ENCODE measurements at regions of chr18 and their contacts with region 1.

Region 1: DNA sequence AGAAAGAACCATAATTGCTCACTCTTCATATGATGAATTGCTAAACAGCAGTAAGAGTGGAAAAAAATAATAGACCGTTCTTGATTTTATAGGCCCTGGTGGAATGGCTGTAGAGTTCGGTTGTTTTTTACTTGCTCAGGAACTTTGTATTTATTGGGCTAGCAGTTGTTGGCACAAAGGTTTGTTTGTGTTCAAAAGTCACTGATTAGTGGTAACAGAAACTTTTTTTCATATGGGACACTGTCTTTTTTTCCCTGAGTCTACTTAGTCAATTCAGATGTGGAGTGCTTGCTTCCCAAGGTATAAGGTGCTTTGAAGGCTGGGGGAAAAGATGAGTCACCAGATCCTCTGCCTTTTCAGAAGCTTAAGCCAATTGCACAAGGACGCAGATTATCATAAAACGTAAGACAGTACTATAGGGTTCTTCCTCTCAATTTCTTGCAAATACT is 25.8 kb downstream of the PHLPP1 start:
- DNase-seq: peak; percentile 55 to 65
- H3K4me3 ChIP-seq: peak overlapping the region; percentile 11; the same call in 1 of the 2 replicates
- H3K4me3 Mint-ChIP-seq: peak overlapping the region; percentile 65
- H3K27ac Mint-ChIP-seq: peak overlapping the region; percentile 72
- H3K4me1 ChIP-seq: peaks cover 28% of the 10 kb centered on the region
- H3K4me1 Mint-ChIP-seq: peaks cover 37% of the 10 kb centered on the region
- H3K27me3 ChIP-seq: no peaks in the 10 kb centered on the region
- H3K27me3 Mint-ChIP-seq: no peaks in the 10 kb centered on the region
- CTCF ChIP-seq: no peak

Region 2: DNA sequence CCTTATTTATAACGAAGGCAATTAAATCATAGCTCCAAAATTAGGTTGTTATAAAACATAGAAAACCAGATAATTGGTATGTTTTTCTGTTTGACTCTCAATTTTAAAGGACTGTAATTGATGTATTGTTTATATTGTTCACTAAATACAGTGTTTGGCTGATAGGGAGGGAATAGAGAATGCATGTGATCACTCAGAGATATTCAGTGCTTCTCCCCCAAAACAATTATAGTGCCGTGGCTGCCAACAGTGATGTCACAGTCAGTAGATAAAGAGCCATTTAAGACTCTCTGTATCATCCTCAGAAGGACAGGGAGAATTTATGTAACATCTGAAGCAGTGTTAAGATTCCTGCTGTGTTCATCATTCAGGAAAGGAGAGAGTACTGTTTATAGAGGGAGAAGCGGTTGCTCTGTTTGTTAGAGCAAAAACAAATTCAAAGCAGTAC is 43.8 kb after region 1 on chr18:
- CTCF ChIA-PET with region 1: no interaction called
- POLR2A ChIA-PET with region 1: no interaction called
- intact Hi-C with region 1: loop called (anchors 5 kb)
- DNase-seq: no peak
- H3K4me3 ChIP-seq: no peak overlapping the region
- H3K4me3 Mint-ChIP-seq: no peak overlapping the region
- H3K27ac Mint-ChIP-seq: no peak overlapping the region
- H3K4me1 ChIP-seq: peaks cover 10% of the 10 kb centered on the region; the same call in 1 of the 2 replicates
- H3K4me1 Mint-ChIP-seq: peaks cover 35% of the 10 kb centered on the region
- H3K27me3 ChIP-seq: no peaks in the 10 kb centered on the region
- H3K27me3 Mint-ChIP-seq: no peaks in the 10 kb centered on the region
- CTCF ChIP-seq: no peak